ENCODE measurements at regions of chr1 and their contacts with region 1.

Region 1: GRCh38 chr1:151472856-151473731 is 13.8 kb upstream of the POGZ start:
- DNase-seq: no peak
- H3K4me3 ChIP-seq: peak overlapping the region; percentile 48
- H3K27ac ChIP-seq: no peak overlapping the region
- H3K27me3 ChIP-seq: no peaks in the 10 kb centered on the region
- CTCF ChIP-seq: no peak

Region 2: DNA sequence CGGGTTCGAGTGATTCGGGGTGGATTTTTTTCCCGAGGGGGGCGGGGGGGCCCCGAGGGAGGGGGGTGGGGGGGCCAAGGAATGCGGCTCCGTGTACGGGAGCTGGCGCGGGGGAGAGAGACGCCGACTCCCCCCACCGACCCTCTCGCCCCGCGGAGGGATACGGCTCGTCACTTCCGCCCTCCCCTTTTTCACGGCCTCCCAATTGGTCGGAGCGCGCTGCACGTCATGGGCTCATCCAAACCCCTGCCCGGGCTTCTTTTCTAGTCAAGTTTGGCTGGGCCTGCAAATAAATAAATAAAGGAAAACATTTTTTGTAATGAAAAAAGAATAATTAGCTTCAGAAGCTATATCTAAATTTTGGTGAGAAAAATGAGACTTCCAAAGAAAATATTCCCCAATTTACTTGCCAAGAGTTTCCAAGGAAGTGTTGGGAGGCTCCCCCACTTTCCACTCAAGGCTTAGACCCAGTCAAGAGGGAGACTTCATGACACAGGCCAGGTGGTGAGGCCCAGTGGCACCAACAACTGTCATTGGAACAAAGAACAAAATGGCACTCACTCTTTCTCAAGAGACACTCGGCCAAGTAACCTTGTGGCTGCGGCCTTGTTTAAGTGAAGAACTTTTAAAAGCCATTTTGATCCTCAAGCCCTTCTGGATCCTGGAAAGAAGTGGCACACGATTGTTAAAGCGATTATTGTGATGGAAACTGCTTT is 13.6 kb before region 1 on chr1 and contains the start of gene POGZ:
- CTCF ChIA-PET with region 1: no interaction called
- POLR2A ChIA-PET with region 1: interaction called, 12 read pairs
- DNase-seq: peak; percentile 95
- H3K4me3 ChIP-seq: peak within 1 kb of the TSS; percentile 73
- H3K27ac ChIP-seq: peak within 1 kb of the TSS; percentile 93
- H3K27me3 ChIP-seq: peaks cover 4% of the 10 kb centered on the region
- CTCF ChIP-seq: no peak
- polyA plus RNA-seq, gene POGZ: 43.4 and 45.7 TPM in 2 replicates

Measured in AG04450 (cell line).